Endothelial cell of umbilical vein (primary cell): ENCODE measurements at regions of chr22 and their contacts with region 1.

Region 1: GRCh38 chr22:20783844-20784723 is 10.2 kb downstream of the SERPIND1 start:
- DNase-seq: peak; percentile 85
- H3K4me3 ChIP-seq: peak overlapping the region in 1 of 3 experiments; percentile 32
- H3K27ac ChIP-seq: peak overlapping the region; percentile 97
- H3K4me1 ChIP-seq: peaks cover 55% of the 10 kb centered on the region
- H3K27me3 ChIP-seq: no peaks in the 10 kb centered on the region
- CTCF ChIP-seq: peak; percentile 76 to 77
- POLR2A ChIP-seq: peak; percentile 22

Region 2: DNA sequence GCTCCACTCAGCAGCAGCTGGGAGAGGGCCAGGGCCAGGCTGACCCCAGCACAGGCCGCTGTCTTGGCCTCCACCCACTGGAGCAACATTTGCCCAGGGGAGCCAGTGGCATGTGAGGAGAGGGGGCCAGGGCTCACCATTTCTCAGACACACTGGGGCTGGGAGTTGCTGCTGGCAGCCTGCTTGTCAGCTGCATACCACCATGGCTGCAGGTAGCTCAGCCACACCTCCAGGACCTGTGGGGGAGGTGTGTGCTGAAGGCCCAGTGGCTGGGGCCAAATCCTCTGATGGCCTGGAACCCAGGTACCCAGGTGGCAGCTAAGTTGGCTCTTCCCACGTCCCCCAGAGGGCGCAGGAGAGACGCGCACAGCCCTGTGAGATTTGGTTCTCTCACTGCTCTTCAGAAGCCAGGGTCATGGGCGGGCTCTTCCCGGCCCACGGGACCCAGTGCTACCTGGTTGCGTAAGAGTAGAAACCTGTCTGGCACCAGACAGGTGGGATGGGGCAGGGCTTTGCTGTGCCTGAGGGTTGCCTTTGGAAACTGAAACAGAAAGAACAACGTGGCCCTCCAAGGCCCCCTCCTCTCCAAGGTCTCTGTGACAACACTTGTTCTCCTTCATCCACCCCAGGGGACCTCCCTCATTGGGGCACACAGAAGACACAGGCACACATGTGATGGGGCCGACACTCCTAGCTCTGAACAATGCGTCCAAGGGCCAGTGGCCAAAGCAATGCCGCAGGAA is 177.9 kb before region 1 on chr22:
- CTCF ChIA-PET with region 1: interaction called, 7 read pairs
- POLR2A ChIA-PET with region 1: no interaction called
- dilution Hi-C with region 1: no loop called
- intact Hi-C with region 1: loop called (anchors 1 kb)
- DNase-seq: peak; percentile 49
- H3K4me3 ChIP-seq: no peak overlapping the region
- H3K27ac ChIP-seq: no peak overlapping the region
- H3K4me1 ChIP-seq: no peaks in the 10 kb centered on the region
- H3K27me3 ChIP-seq: peaks cover 0 to 1% of the 10 kb centered on the region in 2 experiments
- CTCF ChIP-seq: peak; percentile 65 to 89
- POLR2A ChIP-seq: no peak

Region 3: DNA sequence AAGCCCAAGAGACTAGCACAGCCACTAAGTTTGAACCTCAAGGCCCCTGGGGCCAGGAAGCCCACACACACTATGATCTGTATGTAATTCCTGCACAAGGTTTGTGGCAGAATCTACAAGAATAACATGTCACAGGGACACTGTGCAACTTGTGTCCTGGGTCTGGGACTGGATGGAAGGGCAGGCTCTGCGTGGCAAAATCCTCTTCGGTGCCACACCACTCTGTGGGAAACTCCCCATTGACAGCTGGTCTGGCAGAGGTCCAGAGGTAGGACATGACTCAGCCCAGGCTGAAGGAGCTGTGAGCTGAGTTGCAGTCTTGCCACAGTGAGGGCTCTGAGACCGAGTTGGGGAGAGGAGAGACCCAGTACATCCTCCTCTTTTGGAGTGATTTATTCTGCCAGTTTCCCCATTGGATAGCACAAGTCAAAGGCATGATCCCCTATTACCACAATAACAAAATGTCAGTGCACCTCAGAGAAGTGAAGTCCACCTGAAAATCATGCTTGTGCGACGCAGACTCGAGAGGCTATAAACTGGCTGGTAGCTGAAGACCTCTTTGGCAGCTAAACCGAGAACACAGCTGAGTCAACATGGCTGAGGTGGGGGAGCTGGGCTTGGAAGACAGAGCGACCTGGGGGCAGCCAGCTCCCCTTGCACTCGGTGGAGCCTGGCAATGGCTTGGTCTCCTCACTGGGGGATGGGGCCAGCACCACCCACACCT is 33.5 kb before region 1 on chr22:
- CTCF ChIA-PET with region 1: interaction called, 62 read pairs
- POLR2A ChIA-PET with region 1: no interaction called
- dilution Hi-C with region 1: no loop called
- intact Hi-C with region 1: no loop called
- DNase-seq: peak; percentile 83
- H3K4me3 ChIP-seq: no peak overlapping the region
- H3K27ac ChIP-seq: peak overlapping the region; percentile 32
- H3K4me1 ChIP-seq: peaks cover 13% of the 10 kb centered on the region
- H3K27me3 ChIP-seq: no peaks in the 10 kb centered on the region
- CTCF ChIP-seq: no peak
- POLR2A ChIP-seq: no peak

Region 4: GRCh38 chr22:20771918-20772625 is 12.0 kb before region 1 on chr22:
- CTCF ChIA-PET with region 1: interaction called, 21 read pairs
- POLR2A ChIA-PET with region 1: no interaction called
- dilution Hi-C with region 1: no loop called
- intact Hi-C with region 1: no loop called
- DNase-seq: no peak
- H3K4me3 ChIP-seq: no peak overlapping the region
- H3K27ac ChIP-seq: no peak overlapping the region
- H3K4me1 ChIP-seq: no peaks in the 10 kb centered on the region
- H3K27me3 ChIP-seq: no peaks in the 10 kb centered on the region
- CTCF ChIP-seq: peak in 1 of 2 donors; percentile 11
- POLR2A ChIP-seq: no peak

Region 5: DNA sequence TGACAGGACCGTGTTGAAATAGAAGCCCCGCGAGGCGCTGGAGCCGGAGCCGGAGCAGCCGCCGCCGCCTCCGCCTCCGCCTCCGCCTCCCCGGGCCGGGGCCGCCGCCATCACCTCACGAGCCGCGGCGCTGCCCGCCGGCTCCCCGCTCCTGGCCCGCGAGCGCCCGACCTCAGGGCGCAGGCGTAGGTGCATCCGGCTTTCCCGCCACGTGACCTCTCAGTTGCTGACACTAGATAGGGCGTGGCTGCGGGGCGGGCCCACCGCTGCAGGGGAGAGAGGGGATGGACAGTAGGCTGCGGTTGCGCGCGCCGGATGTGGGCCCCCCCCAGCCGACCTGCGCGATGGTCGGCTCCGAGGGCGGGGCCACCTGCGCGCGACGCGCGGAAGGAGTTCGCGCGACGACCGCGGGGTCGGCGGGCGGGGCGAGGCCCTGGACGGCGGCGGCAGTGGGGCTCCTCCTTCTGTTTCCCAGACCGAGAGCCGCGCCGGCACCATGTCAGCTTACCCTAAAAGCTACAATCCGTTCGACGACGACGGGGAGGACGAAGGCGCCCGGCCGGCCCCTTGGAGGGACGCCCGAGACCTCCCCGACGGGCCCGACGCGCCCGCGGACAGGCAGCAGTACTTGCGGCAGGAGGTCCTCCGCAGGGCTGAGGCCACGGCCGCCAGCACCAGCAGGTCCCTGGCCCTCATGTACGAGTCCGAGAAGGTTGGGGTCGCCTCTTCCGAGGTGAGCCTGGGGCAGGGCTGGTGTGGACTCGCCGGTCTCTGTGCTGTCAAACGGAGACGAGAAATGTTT is 74.7 kb after region 1 on chr22 and contains the starts of genes PI4KA and SNAP29:
- CTCF ChIA-PET with region 1: interaction called, 6 read pairs
- POLR2A ChIA-PET with region 1: no interaction called
- dilution Hi-C with region 1: no loop called
- intact Hi-C with region 1: loop called (anchors 1 kb)
- DNase-seq: peak; percentile 97
- H3K4me3 ChIP-seq: peak within 1 kb of the TSS; percentile 69 to 89 (median 79)
- H3K27ac ChIP-seq: peak within 1 kb of the TSS; percentile 50
- H3K4me1 ChIP-seq: peaks cover 17% of the 10 kb centered on the region
- H3K27me3 ChIP-seq: no peaks in the 10 kb centered on the region
- CTCF ChIP-seq: no peak
- POLR2A ChIP-seq: no peak
- total RNA-seq, gene PI4KA: 51.4 and 56.4 TPM in 2 replicates
- total RNA-seq, gene SNAP29: 26.7 and 27.0 TPM in 2 replicates